ENCODE measurements at regions of chr5 and their contacts with region 1.

Region 1: GRCh38 chr5:54517174-54518092 is at the start of gene SNX18:
- DNase-seq: peak; percentile 92
- ATAC-seq: peak; percentile 88
- H3K4me3 Mint-ChIP-seq: peak within 1 kb of the TSS; percentile 86
- H3K27ac Mint-ChIP-seq: peak within 1 kb of the TSS; percentile 50
- H3K4me1 Mint-ChIP-seq: peaks cover 25% of the 10 kb centered on the region
- H3K27me3 Mint-ChIP-seq: no peaks in the 10 kb centered on the region
- CTCF ChIP-seq: peak; percentile 60
- total RNA-seq, gene SNX18: 59.2 and 63.4 TPM in 2 replicates

Region 2: GRCh38 chr5:54310433-54311175 is 206.8 kb before region 1 on chr5 and contains the start of gene ARL15:
- CTCF ChIA-PET with region 1: no interaction called
- POLR2A ChIA-PET with region 1: interaction called, 5 read pairs
- intact Hi-C with region 1: loop called (anchors 10 kb)
- DNase-seq: peak; percentile 93
- ATAC-seq: peak; percentile 95
- H3K4me3 Mint-ChIP-seq: peak within 1 kb of the TSS; percentile 97
- H3K27ac Mint-ChIP-seq: peak within 1 kb of the TSS; percentile 91
- H3K4me1 Mint-ChIP-seq: peaks cover 24% of the 10 kb centered on the region
- H3K27me3 Mint-ChIP-seq: peaks cover 4% of the 10 kb centered on the region
- CTCF ChIP-seq: no peak
- total RNA-seq, gene ARL15: 13.0 and 17.5 TPM in 2 replicates

Region 3: DNA sequence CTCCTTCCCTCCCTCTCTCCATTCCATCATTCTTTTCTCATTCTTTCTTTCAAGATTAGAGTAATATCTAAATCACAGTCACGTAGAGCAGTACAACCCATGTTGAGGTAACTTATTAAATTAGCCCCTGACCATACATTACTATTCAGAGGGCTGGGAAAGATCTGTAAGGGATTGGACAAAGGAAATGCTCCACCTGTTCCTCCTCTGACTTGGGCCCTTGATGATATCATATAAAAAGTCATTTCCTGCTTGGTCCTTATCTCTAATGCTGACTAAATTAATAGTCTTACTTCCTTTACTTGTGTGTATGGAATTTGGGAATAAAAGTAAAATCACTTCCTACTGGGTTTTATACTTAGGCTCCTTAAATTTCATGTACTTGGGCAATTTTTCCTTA is 40.9 kb after region 1 on chr5:
- CTCF ChIA-PET with region 1: no interaction called
- POLR2A ChIA-PET with region 1: no interaction called
- intact Hi-C with region 1: loop called (anchors 5 kb)
- DNase-seq: no peak
- ATAC-seq: no peak
- H3K4me3 Mint-ChIP-seq: no peak overlapping the region
- H3K27ac Mint-ChIP-seq: no peak overlapping the region
- H3K4me1 Mint-ChIP-seq: peaks cover 14% of the 10 kb centered on the region
- H3K27me3 Mint-ChIP-seq: no peaks in the 10 kb centered on the region
- CTCF ChIP-seq: no peak

Region 4: DNA sequence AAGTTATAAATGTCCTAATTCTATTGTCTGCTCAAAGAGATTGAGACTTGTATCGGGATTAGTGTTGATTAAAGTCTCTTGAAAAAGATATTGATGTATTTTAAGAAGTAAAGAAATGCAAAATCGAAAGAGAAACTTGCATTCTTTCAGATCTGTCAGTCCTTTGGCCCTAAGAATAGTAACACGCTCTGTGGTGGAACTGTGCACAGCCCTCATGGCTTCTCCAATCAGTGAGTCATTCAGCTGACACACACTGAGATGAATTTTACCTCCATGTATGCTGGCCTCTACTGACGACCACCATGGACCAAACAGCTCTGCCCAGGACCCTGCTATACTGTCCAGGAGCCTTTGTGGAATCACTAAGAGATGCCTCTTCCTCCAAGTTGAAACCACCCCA is 235.6 kb after region 1 on chr5:
- CTCF ChIA-PET with region 1: interaction called, 9 read pairs
- POLR2A ChIA-PET with region 1: interaction called, 5 read pairs
- intact Hi-C with region 1: loop called (anchors 5 kb)
- DNase-seq: no peak
- ATAC-seq: peak; percentile 90
- H3K4me3 Mint-ChIP-seq: peak overlapping the region; percentile 72
- H3K27ac Mint-ChIP-seq: peak overlapping the region; percentile 81
- H3K4me1 Mint-ChIP-seq: peaks cover 60% of the 10 kb centered on the region
- H3K27me3 Mint-ChIP-seq: no peaks in the 10 kb centered on the region
- CTCF ChIP-seq: no peak

Region 5: DNA sequence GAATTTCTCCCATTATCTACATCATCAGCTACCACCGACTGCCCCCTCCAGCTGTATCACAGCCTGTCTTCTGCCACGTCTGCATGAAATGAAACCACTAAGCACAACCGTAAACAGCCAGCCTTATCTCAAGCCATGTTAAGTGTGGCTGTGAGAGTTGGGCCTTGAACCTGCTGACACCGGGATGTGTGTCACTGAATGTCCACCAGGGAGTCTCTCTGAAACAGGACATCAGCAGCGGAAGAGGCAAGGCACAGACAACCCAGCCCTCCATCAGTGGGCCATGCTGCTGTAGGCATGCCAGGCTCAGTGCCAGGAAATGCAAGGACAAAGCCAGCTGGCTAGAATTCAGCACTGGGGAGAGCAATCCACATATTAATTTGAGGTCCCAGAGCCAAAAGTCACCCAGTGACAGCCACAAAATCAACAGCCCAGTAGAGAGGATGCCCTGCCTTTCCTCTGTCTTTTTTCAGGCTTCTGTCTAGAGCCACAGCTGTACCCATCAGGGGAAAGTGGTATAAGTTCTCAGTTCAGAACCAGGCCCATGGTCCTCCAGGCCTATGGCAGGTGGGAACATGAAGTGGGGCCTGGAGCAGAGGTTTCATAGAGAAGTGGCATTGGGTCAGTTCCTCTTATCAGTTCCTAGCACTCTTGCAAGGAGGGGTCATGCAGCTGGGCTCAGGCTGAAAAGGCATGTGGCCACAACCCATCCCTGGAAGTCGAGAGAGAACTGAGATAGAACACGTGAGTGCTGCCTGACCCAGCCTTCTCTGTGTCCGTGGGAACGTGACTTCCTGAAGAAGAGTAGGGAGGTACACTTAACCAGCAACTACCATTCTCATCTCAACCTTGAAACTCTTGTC is 268.5 kb after region 1 on chr5:
- CTCF ChIA-PET with region 1: interaction called, 5 read pairs
- POLR2A ChIA-PET with region 1: interaction called, 3 read pairs
- intact Hi-C with region 1: loop called (anchors 2 kb)
- DNase-seq: peak; percentile 47
- ATAC-seq: peak; percentile 90
- H3K4me3 Mint-ChIP-seq: no peak overlapping the region
- H3K27ac Mint-ChIP-seq: peak overlapping the region; percentile 88
- H3K4me1 Mint-ChIP-seq: peaks cover 32% of the 10 kb centered on the region
- H3K27me3 Mint-ChIP-seq: no peaks in the 10 kb centered on the region
- CTCF ChIP-seq: no peak

Region 6: GRCh38 chr5:54874373-54874921 is 357.0 kb after region 1 on chr5:
- CTCF ChIA-PET with region 1: interaction called, 20 read pairs
- POLR2A ChIA-PET with region 1: interaction called, 3 read pairs
- intact Hi-C with region 1: no loop called
- DNase-seq: no peak
- ATAC-seq: no peak
- H3K4me3 Mint-ChIP-seq: no peak overlapping the region
- H3K27ac Mint-ChIP-seq: no peak overlapping the region
- H3K4me1 Mint-ChIP-seq: no peaks in the 10 kb centered on the region
- H3K27me3 Mint-ChIP-seq: peaks cover 30% of the 10 kb centered on the region
- CTCF ChIP-seq: no peak

Region 7: DNA sequence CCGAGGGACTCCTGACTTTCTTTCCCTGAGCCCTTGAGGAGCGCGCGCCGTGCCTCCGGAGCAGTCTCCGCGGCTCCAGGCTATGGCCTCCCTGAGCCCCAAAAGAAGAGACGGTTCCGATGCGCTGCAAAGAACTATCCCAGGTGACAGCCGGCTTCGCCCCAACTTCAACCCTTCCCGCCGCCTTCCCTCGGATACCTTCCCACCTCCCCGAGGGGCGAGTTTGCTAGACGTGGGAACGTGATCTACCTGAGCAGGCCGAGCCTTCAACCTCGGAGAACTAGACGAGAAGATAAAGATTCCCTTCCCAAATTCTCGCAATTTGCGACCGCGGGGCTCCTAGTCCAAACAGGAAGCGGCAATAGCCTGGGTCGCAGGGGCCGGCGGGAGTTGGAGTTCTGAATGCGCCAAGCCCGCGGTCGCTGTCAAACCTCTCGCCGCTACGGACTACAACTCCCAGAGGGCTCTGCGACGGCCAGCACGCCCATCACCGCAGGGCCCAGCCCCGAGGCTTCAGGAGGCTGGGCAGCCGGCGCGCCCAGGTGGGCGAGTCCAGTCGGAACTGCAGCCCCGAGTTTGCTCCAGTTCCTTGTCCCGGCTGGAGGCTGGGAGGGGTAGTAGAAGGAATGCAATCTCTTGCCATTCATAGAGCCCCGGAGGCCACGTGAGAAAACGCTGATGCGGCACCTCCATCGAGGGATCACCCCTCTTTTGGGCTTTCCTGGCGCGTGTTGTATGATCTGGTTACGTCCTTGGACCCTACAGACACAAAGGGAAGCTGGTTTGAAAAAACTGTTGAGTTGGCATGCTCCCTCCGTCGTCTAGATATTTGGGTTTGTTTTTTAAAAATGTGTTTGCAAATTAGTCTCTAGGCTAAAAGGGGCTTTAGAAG is 1194.8 kb after region 1 on chr5 and contains the start of gene SLC38A9:
- CTCF ChIA-PET with region 1: no interaction called
- POLR2A ChIA-PET with region 1: no interaction called
- intact Hi-C with region 1: loop called (anchors 2 kb)
- DNase-seq: peak; percentile 91
- ATAC-seq: peak; percentile 100
- H3K4me3 Mint-ChIP-seq: peak within 1 kb of the TSS; percentile 100
- H3K27ac Mint-ChIP-seq: peak within 1 kb of the TSS; percentile 92
- H3K4me1 Mint-ChIP-seq: peaks cover 17% of the 10 kb centered on the region
- H3K27me3 Mint-ChIP-seq: no peaks in the 10 kb centered on the region
- CTCF ChIP-seq: no peak
- total RNA-seq, gene SLC38A9: 26.6 and 29.9 TPM in 2 replicates

Measured in activated B cell treated with CpG ODN at 0.5 μM for 24 hours (primary cell).